Activated naive CD4-positive, alpha-beta T cell treated with anti-CD3 and anti-CD28 coated beads, Interleukin-2, amount 10 ng/mL, durations not matched to agents 7 days and 5 days (primary cell): ENCODE measurements at regions of chr2 and their contacts with region 1.

Region 1: DNA sequence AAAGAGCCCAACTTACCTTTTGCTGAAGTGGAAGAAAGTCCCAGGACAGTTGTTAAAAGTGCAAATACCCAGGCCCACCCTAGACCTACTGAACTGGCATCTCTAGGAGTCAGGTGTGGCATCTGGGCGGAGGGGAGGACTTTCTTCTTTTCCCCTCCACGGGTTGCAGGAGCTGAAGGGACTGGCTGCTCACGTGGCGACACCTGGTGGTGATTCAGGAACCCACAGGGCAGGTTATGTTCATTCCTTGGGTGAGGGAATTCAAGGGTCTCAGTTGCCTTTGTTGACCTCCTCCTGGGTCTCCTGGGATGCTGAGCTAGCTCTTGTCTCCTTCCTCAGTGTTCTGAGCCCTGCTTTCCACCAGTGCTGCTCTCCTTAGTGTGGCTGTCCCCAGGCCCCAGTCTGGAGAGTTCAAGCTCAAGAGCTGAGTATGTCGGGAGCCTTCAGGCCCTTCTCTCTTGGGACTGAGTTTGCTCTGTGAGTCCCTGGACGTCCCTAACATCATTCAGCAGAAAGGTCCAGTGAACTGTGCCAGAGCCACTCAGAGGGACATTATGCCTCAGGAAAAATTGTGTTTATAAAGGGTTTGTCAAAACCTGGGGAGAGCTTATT is 56.9 kb downstream of the DYSF start:
- DNase-seq: peak; percentile 80
- H3K4me3 Mint-ChIP-seq: no peak overlapping the region
- H3K27ac Mint-ChIP-seq: no peak overlapping the region
- H3K4me1 Mint-ChIP-seq: no peaks in the 10 kb centered on the region
- H3K27me3 Mint-ChIP-seq: peaks cover 16% of the 10 kb centered on the region

Region 2: GRCh38 chr2:71299507-71299906 is 210.8 kb before region 1 on chr2:
- CTCF ChIA-PET with region 1: interaction called, 117 read pairs
- DNase-seq: no peak
- H3K4me3 Mint-ChIP-seq: no peak overlapping the region
- H3K27ac Mint-ChIP-seq: no peak overlapping the region
- H3K4me1 Mint-ChIP-seq: no peaks in the 10 kb centered on the region
- H3K27me3 Mint-ChIP-seq: no peaks in the 10 kb centered on the region

Region 3: GRCh38 chr2:71460595-71461303 is 49.6 kb before region 1 on chr2:
- CTCF ChIA-PET with region 1: interaction called, 31 read pairs
- DNase-seq: no peak
- H3K4me3 Mint-ChIP-seq: no peak overlapping the region
- H3K27ac Mint-ChIP-seq: no peak overlapping the region
- H3K4me1 Mint-ChIP-seq: peaks cover under 1% of the 10 kb centered on the region
- H3K27me3 Mint-ChIP-seq: peaks cover 16% of the 10 kb centered on the region

Region 4: DNA sequence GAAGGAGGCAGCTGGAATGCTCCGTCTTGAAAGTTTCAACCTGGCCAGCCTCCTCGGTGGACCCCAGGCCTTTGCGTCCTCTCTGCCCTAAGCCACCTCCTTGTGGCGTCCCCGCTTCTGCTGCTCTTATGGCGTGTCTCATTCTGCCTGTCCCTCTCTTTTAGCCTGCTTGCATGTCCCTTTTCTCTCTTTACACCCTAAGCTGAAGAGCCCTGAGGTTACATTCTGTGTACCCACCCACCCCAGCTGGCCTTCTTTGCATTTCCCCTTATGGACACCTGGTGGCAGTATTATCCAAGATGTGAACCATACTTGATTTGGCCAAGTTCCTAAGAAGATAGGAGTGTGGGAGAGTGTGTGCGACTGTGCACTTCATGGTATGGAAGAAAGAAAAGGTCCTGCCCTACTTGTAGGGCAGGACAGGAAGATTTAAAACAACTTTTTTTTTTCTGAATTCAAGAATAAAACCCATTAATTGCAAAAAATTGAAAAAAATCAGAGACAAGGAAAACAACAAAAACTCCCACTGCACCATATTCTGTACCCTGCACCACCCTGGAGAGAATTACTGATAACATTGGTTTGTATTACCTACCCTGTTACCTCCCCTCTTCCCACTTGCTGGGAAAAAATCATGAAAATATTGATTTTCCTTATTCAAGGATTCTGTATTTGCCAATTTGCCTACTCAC is 20.5 kb after region 1 on chr2:
- CTCF ChIA-PET with region 1: interaction called, 13 read pairs
- DNase-seq: peak; percentile 37
- H3K4me3 Mint-ChIP-seq: no peak overlapping the region
- H3K27ac Mint-ChIP-seq: no peak overlapping the region
- H3K4me1 Mint-ChIP-seq: no peaks in the 10 kb centered on the region
- H3K27me3 Mint-ChIP-seq: peaks cover 34% of the 10 kb centered on the region